PC-9 (cell line): ENCODE measurements at regions of chr4 and their contacts with region 1.

Region 1: DNA sequence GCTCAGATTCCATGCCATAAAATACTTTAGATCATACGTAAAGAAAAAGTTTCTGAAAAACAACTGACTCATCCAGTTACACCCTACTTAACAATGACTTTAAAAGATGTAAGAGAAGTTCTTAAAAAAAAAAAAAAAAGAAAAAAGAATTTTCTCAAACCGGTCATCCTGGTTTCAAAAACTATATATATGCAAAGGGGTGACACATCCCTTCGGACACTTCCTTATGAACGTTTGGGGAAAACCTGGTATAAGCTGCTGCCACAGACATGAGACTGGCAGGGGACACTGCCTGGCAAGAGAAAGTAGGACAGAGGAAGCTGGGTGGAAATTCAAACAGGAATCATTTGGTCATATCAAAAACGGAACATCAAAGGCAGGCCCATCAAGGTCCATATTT is 81.2 kb upstream of the PRSS48 start:
- DNase-seq: peak; percentile 58 to 92
- H3K4me3 ChIP-seq: peak overlapping the region; percentile 33; the same call in 1 of the 2 replicates
- H3K27ac ChIP-seq: peak overlapping the region; percentile 96
- H3K4me1 ChIP-seq: peaks cover 31% of the 10 kb centered on the region
- H3K27me3 ChIP-seq: no peaks in the 10 kb centered on the region
- CTCF ChIP-seq: no peak

Region 2: DNA sequence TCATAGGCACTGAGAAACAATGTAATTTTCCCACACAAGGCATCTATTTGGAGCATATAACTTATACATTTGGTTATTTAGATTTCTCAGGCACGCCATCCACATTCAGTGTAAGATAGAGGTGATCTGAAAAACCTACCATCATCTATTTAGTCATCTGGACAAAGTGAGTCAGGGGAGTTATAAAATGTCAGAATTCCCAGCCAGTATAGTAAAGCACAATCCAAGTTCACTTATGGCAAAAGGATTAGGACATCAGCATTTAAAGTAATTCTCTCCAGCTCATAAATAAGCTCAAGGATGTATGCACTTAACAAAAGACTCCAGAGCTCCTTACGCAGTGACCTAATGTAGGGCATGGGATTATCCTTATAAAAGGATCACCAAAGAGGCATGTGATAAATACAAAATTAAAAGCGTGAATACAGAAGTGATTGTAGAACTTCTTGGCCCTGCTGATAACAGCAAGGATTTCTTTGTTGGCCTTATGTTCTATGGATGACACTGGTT is 1182.9 kb before region 1 on chr4:
- CTCF ChIA-PET with region 1: no interaction called
- POLR2A ChIA-PET with region 1: no interaction called
- intact Hi-C with region 1: no loop called
- DNase-seq: no peak
- H3K4me3 ChIP-seq: no peak overlapping the region
- H3K27ac ChIP-seq: no peak overlapping the region
- H3K4me1 ChIP-seq: no peaks in the 10 kb centered on the region
- H3K27me3 ChIP-seq: no peaks in the 10 kb centered on the region
- CTCF ChIP-seq: no peak

Region 3: DNA sequence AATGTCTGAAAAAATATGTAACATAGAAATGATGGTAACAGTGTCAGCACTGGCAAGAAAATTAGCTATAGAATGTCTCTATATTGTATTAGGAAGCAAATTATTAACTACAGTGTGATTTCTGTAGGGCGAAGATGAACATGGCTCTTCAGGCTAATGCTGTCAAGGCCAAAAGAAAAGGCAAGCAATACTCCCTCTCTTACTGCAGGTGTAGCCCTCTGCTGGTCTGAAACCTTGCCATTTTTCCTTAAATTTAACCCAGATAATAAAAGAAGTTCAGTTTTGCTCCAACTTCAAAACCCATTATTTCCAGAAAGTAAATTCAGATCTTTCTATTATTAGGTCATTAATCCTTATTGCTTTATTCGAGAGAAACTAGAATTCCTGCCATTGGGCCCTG is 396.6 kb before region 1 on chr4:
- CTCF ChIA-PET with region 1: no interaction called
- POLR2A ChIA-PET with region 1: no interaction called
- intact Hi-C with region 1: no loop called
- DNase-seq: no peak
- H3K4me3 ChIP-seq: no peak overlapping the region
- H3K27ac ChIP-seq: no peak overlapping the region
- H3K4me1 ChIP-seq: no peaks in the 10 kb centered on the region
- H3K27me3 ChIP-seq: no peaks in the 10 kb centered on the region
- CTCF ChIP-seq: no peak

Region 4: DNA sequence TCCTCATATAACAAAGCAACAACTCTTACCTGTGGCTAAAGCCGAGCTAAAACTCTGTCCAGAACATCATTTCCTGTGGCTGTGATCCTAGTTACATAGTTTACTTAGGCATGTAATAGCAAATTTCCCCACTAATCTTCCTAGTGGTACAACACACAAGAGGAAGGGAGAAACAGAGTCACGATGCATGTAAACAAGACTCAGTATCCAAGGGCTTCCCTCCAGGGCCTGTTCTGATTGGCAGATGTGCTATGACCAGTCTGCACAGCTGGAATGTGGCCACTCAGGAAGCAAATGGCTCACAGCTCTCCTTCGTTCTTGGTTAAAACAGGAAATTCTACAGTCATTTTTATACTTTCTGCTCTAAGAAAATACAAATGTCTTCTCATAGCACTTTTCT is 31.9 kb after region 1 on chr4:
- CTCF ChIA-PET with region 1: interaction called, 16 read pairs
- POLR2A ChIA-PET with region 1: interaction called, 4 read pairs
- intact Hi-C with region 1: no loop called
- DNase-seq: peak in 1 of 2 experiments; percentile 11
- H3K4me3 ChIP-seq: no peak overlapping the region
- H3K27ac ChIP-seq: no peak overlapping the region
- H3K4me1 ChIP-seq: peaks cover 6% of the 10 kb centered on the region
- H3K27me3 ChIP-seq: no peaks in the 10 kb centered on the region
- CTCF ChIP-seq: no peak

Region 5: GRCh38 chr4:151325111-151325948 is 129.5 kb after region 1 on chr4 and contains the start of gene SH3D19:
- CTCF ChIA-PET with region 1: interaction called, 3 read pairs
- POLR2A ChIA-PET with region 1: no interaction called
- intact Hi-C with region 1: loop called (anchors 2 kb)
- DNase-seq: peak; percentile 56 to 82
- H3K4me3 ChIP-seq: peak within 1 kb of the TSS; percentile 67
- H3K27ac ChIP-seq: peak within 1 kb of the TSS; percentile 93
- H3K4me1 ChIP-seq: peaks cover 39% of the 10 kb centered on the region
- H3K27me3 ChIP-seq: no peaks in the 10 kb centered on the region
- CTCF ChIP-seq: no peak
- total RNA-seq, gene SH3D19: 40.0 and 41.7 TPM in 2 replicates

Region 6: DNA sequence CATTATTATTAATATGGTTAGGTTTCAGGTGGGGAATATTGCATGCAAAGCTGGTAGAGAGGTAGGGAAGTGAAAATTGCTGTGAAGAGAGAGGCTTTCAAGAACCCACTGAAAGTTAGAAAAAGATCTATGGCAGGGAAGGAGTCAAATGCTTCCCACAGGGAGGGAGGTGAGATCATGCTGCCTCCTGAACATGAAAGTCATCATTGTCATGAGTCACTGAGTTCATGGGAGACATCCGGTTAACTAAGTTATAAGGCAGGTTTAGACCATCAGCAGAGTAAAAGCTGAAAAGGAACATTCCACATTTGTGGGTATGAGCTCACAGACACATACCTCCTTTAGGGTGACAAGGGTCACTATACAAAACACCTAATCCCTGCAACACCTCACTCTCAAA is 548.8 kb after region 1 on chr4:
- CTCF ChIA-PET with region 1: no interaction called
- POLR2A ChIA-PET with region 1: no interaction called
- intact Hi-C with region 1: no loop called
- DNase-seq: peak; percentile 30 to 90
- H3K4me3 ChIP-seq: no peak overlapping the region
- H3K27ac ChIP-seq: peak overlapping the region; percentile 81
- H3K4me1 ChIP-seq: peaks cover 22% of the 10 kb centered on the region
- H3K27me3 ChIP-seq: no peaks in the 10 kb centered on the region
- CTCF ChIP-seq: no peak

Region 7: DNA sequence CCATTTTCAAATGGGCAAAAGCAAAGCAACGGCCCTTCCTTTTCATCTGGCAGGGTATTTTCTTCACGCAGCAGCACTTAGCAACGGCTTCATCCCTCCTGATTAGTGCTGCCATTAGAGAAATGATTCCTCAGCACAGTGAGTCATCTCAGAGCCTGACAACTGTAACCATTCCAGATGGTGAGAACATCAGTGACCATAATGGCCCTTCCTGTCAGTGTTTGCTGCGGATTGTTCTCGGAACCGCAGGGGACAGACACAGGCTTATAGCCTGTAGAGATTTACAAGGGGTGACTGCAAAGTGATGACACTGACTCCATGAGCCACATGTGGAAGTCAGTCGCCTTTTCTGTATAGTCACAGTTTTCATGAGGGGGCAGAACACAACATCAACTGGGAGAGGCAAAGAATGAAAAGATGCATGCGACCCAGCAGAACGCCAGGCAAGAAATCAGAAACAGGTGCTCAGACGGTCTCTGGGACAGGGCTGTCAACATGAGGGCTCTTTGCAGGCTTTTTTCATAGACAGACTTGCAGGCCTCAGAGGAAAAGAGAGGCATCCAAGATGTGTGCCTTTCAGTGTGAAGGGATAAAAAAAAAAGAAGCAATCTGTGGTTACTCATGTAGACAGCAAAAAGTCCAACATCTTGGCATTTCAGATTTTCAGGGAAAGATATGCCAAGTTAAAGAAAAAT is 1410.0 kb after region 1 on chr4:
- CTCF ChIA-PET with region 1: no interaction called
- POLR2A ChIA-PET with region 1: interaction called, 12 read pairs
- intact Hi-C with region 1: no loop called
- DNase-seq: no peak
- H3K4me3 ChIP-seq: no peak overlapping the region
- H3K27ac ChIP-seq: no peak overlapping the region
- H3K4me1 ChIP-seq: no peaks in the 10 kb centered on the region
- H3K27me3 ChIP-seq: no peaks in the 10 kb centered on the region
- CTCF ChIP-seq: no peak

Region 8: DNA sequence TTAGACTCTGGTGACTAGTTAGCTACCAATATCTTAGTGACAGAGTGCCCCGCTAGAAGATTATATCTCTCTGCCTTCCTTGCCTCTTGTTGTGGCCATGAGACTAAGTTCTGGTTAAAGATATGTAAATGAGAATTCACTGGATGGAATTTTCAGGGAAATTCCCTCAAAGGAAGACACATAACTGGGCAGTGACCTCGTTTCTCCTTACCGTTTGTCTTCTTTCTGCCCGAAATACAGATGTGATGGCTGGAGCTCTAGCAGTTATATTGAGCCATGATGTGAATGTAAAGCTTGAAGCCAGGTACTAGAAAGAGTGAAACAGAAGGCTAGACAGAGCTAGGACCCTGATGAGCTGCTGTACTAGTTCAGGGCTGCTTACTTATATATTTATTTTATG is 1820.8 kb after region 1 on chr4:
- CTCF ChIA-PET with region 1: no interaction called
- POLR2A ChIA-PET with region 1: interaction called, 22 read pairs
- intact Hi-C with region 1: no loop called
- DNase-seq: no peak
- H3K4me3 ChIP-seq: no peak overlapping the region
- H3K27ac ChIP-seq: no peak overlapping the region
- H3K4me1 ChIP-seq: no peaks in the 10 kb centered on the region
- H3K27me3 ChIP-seq: no peaks in the 10 kb centered on the region
- CTCF ChIP-seq: no peak